Dorsolateral prefrontal cortex (tissue), 120 donors: ENCODE measurements at regions of chr3 and their contacts with region 1.

Region 1: GRCh38 chr3:58008140-58009025 is at the start of gene FLNB:
- DNase-seq: peak; percentile 39 to 75 (median 60)
- H3K4me3 ChIP-seq: peak within 1 kb of the TSS; percentile 60 to 100 (median 91)
- H3K27ac ChIP-seq: peak within 1 kb of the TSS in 57 of 59 donors; percentile 10 to 96 (median 76)
- H3K27me3 ChIP-seq: no peaks in the 10 kb centered on the region
- CTCF ChIP-seq: peak; percentile 30 to 91 (median 68)
- total RNA-seq, gene FLNB: 29.4 to 98.8 (median 48.0) TPM

Region 2: GRCh38 chr3:57951066-57951882 is 57.1 kb before region 1 on chr3:
- intact Hi-C with region 1: loop called in 1 of 2 experiments (anchors 5 kb)
- DNase-seq: peak in 8 of 10 donors; percentile 29 to 73 (median 54)
- H3K4me3 ChIP-seq: no peak overlapping the region
- H3K27ac ChIP-seq: peak overlapping the region in 53 of 59 donors; percentile 22 to 93 (median 65)
- H3K27me3 ChIP-seq: no peaks in the 10 kb centered on the region
- CTCF ChIP-seq: no peak

Region 3: GRCh38 chr3:58167431-58168351 is 159.3 kb after region 1 on chr3:
- intact Hi-C with region 1: loop called in 1 of 2 experiments (anchors 2 kb)
- DNase-seq: peak; percentile 36 to 81 (median 71)
- H3K4me3 ChIP-seq: no peak overlapping the region
- H3K27ac ChIP-seq: peak overlapping the region in 20 of 59 donors; percentile 2 to 89 (median 36)
- H3K27me3 ChIP-seq: no peaks in the 10 kb centered on the region
- CTCF ChIP-seq: peak in 55 of 56 donors; percentile 57 to 93 (median 80)

Region 4: GRCh38 chr3:58177747-58178527 is 169.6 kb after region 1 on chr3:
- intact Hi-C with region 1: loop called (anchors 2 to 5 kb)
- DNase-seq: peak; percentile 82 to 93 (median 89)
- H3K4me3 ChIP-seq: peak overlapping the region; percentile 34 to 75 (median 59)
- H3K27ac ChIP-seq: peak overlapping the region in 5 of 59 donors; percentile 25 to 75 (median 59)
- H3K27me3 ChIP-seq: no peaks in the 10 kb centered on the region
- CTCF ChIP-seq: peak; percentile 79 to 98 (median 94)

Region 5: DNA sequence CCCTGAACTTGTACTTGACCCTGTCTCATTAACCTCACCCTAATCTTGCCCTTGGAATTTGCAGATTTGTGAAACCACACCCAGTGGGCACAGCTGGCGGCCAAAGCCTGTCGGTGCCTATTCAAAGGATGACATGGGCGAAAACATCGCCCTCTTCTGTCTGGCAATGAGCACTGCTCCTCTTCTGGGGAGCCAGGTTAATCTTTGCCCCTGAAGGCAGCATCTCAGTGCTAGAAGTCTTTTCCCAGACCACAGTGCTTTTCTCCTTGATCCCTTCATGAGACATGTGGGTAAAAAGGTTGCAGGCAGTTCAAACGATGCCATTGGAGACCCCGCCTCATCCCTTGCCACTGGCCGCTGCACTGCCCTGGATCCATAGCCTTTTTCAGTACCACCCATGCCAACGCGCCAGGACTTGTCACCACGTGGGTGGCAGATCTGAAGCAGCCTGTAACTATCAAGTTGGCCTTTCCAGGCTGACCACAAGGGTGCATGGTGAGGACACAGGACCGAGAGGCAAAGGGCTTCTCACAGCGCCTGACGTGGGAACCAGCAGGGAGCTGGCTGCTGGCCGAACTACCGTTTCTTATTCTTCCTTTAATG is 208.9 kb after region 1 on chr3:
- intact Hi-C with region 1: loop called in 1 of 2 experiments (anchors 5 kb)
- DNase-seq: peak; percentile 41 to 80 (median 70)
- H3K4me3 ChIP-seq: peak overlapping the region in 25 of 59 donors; percentile 4 to 45 (median 24)
- H3K27ac ChIP-seq: peak overlapping the region in 44 of 59 donors; percentile 1 to 76 (median 46)
- H3K27me3 ChIP-seq: no peaks in the 10 kb centered on the region
- CTCF ChIP-seq: peak in 55 of 56 donors; percentile 4 to 88 (median 70)

Region 6: GRCh38 chr3:58237238-58237940 is 229.0 kb after region 1 on chr3 and contains the start of gene ABHD6:
- intact Hi-C with region 1: loop called (anchors 1 to 2 kb)
- DNase-seq: peak; percentile 63 to 89 (median 71)
- H3K4me3 ChIP-seq: peak within 1 kb of the TSS; percentile 52 to 99 (median 93)
- H3K27ac ChIP-seq: peak within 1 kb of the TSS; percentile 80 to 97 (median 92)
- H3K27me3 ChIP-seq: no peaks in the 10 kb centered on the region
- CTCF ChIP-seq: peak; percentile 27 to 93 (median 74)
- total RNA-seq, gene ABHD6: 32.0 to 78.5 (median 50.8) TPM

Region 7: GRCh38 chr3:58299839-58300516 is 291.6 kb after region 1 on chr3:
- intact Hi-C with region 1: loop called (anchors 5 kb)
- DNase-seq: no peak
- H3K4me3 ChIP-seq: peak overlapping the region in 5 of 59 donors; percentile 3 to 21 (median 11)
- H3K27ac ChIP-seq: peak overlapping the region in 48 of 59 donors; percentile 7 to 99 (median 93)
- H3K27me3 ChIP-seq: no peaks in the 10 kb centered on the region
- CTCF ChIP-seq: peak; percentile 39 to 90 (median 73)